Activated T-helper 2 cell treated with anti-CD3 and anti-CD28 coated beads, Interferon-gamma antibody, Interleukin-2, Interleukin-4, amounts not matched to agents 10 μg/mL and 5 μg/mL and 100 μg/mL, durations not matched to agents 14 hours and 24 hours and 36 hours (primary cell): ENCODE measurements at regions of chr19 and their contacts with region 1.

Region 1: DNA sequence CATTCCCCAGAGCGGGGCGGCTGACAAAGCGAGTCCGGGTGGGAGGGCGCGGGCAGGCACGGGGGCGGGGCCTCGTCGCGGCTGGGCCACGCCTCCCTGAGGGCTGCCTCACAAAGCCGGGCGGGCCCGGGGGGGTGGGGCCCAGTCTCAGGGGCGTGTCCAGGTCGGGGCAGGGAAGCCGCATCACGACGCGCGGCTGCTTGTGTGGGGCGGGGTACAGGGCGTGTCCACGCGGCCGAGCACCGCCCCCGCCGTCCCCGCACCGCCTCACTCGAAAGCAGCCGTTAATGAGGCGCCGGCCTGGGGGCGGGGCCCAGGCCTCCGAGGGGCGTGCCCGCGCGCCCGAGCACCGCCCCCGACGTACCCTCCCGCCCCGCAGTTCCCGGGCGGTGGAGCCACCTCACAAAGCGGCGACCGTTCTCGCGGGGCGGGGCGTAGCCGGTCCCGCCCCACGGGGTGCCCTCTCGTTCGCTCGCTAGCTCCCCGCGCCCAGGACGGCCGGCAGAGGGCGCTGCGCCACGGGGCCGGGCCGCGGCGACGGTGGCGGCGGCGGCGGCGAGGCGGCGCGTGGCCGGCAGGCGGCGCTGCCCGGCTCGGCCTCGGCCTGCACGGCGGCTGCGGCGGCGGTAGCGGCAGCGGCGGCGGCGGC is at the start of gene CARM1:
- DNase-seq: peak; percentile 97
- H3K4me3 Mint-ChIP-seq: peak within 1 kb of the TSS; percentile 89
- H3K27ac Mint-ChIP-seq: peak within 1 kb of the TSS; percentile 95
- H3K4me1 Mint-ChIP-seq: peaks cover 21% of the 10 kb centered on the region
- H3K27me3 Mint-ChIP-seq: no peaks in the 10 kb centered on the region
- total RNA-seq, gene CARM1: 87.5 and 89.3 TPM in 2 replicates

Region 2: DNA sequence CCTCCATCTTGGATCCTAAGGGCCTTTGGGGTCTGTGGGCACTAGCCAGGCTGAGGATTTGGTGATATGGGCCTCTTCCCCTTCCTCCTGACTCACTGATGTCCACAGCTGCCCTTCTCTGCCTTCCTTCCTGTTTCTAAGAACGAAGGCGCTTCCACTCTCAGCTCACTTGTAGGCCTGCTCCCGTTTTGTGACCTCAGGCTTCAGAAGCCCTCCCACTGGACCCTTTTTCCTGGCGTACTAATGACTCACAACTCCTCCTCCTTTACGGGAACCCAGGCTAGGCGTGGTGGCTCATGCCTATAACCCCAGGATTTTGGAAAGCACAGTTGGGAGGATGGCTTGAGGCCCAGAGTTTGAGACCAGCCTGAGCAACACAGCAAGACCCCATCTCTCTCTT is 90.7 kb before region 1 on chr19:
- intact Hi-C with region 1: no loop called
- DNase-seq: no peak
- H3K4me3 Mint-ChIP-seq: no peak overlapping the region
- H3K27ac Mint-ChIP-seq: peak overlapping the region; percentile 33
- H3K4me1 Mint-ChIP-seq: peaks cover 3% of the 10 kb centered on the region
- H3K27me3 Mint-ChIP-seq: no peaks in the 10 kb centered on the region

Region 3: DNA sequence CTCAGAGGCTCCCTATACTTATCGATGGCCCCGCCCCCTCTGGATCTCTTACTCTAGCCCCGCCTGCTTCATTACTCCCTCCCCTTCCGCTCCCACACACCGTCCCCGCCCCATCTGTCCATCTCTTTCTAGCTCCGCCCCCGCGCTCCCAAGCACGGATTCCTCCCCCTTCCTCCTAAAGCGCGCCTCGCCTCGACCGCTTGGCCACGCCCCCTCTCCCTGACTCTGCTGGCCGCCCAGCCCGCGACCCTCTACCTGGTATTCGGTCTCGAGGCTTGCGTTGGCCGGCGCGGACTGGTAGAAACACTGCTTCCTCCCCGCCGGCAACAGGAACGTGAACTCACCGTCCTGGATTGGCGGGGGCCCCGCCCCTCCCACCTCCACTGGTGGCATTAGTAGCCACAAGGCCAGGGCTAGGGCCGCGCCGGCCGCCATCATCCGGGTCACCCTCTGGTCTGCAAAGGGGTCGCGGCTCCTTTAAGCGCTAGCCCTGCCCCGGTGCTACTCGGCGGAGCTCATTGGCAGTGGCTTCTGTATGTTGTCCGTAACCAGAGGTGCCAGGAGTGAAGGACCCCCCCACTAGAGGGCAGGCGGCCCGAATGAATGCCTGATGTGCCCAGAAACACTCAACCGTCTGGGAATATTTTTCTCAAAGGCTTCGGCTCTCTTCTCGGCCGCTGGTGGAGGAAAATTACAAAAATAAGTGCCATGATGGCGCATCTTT is 35.2 kb before region 1 on chr19 and contains the start of gene TMED1:
- intact Hi-C with region 1: loop called (anchors 1 kb)
- DNase-seq: peak; percentile 95
- H3K4me3 Mint-ChIP-seq: peak within 1 kb of the TSS; percentile 92
- H3K27ac Mint-ChIP-seq: peak within 1 kb of the TSS; percentile 99
- H3K4me1 Mint-ChIP-seq: peaks cover 10% of the 10 kb centered on the region
- H3K27me3 Mint-ChIP-seq: no peaks in the 10 kb centered on the region
- total RNA-seq, gene TMED1: 16.7 and 17.9 TPM in 2 replicates

Region 4: GRCh38 chr19:10928525-10929401 is 57.7 kb after region 1 on chr19 and contains the starts of genes TIMM29 and YIPF2:
- intact Hi-C with region 1: loop called (anchors 2 kb)
- DNase-seq: peak; percentile 91
- H3K4me3 Mint-ChIP-seq: peak within 1 kb of the TSS; percentile 94
- H3K27ac Mint-ChIP-seq: peak within 1 kb of the TSS; percentile 80
- H3K4me1 Mint-ChIP-seq: peaks cover 13% of the 10 kb centered on the region
- H3K27me3 Mint-ChIP-seq: no peaks in the 10 kb centered on the region
- total RNA-seq, gene TIMM29: 18.8 and 19.0 TPM in 2 replicates
- total RNA-seq, gene YIPF2: 25.0 and 25.9 TPM in 2 replicates